ENCODE measurements at regions of chr16 and their contacts with region 1.

Region 1: GRCh38 chr16:67279296-67280089 is at the start of gene PLEKHG4:
- DNase-seq: peak; percentile 78
- H3K4me3 Mint-ChIP-seq: peak within 1 kb of the TSS; percentile 74
- H3K27ac Mint-ChIP-seq: peak within 1 kb of the TSS; percentile 74
- H3K4me1 Mint-ChIP-seq: peaks cover 33% of the 10 kb centered on the region
- H3K27me3 Mint-ChIP-seq: no peaks in the 10 kb centered on the region
- CTCF ChIP-seq: peak; percentile 76
- total RNA-seq, gene PLEKHG4: 30.4 and 32.7 TPM in 2 replicates

Region 2: DNA sequence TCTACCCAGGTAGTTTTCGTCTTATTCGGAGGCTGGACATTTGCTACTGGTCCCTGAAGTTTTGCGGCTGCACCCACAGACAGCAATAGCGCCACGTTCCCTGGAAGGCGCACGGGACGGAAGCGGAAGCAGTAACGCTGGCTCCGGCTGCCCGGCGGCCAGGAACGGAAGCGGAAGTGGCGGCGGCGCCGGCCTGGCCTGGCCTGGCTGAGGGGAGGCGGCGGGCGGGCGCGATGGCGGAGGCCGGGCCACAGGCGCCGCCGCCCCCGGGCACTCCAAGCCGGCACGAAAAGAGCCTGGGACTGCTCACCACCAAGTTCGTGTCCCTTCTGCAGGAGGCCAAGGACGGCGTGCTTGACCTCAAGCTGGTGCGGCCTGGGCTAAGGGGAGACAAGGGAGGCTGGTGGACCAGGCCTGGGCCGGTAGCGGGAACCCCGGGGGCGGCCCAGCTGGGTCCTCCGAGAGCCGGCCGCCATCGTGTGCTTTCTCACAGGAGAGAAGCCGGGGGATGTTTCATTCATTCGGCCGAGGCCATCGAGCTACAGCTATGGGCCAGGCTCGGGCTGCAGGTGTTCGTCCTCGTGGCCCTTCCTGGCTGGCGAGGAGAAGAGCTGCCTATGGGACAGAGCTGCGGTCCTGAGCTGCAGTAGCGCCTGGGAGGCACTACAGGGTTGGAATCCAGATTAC is 87.4 kb before region 1 on chr16 and contains the start of gene E2F4:
- CTCF ChIA-PET with region 1: no interaction called
- POLR2A ChIA-PET with region 1: no interaction called
- intact Hi-C with region 1: loop called (anchors 2 kb)
- DNase-seq: peak; percentile 88
- H3K4me3 Mint-ChIP-seq: peak within 1 kb of the TSS; percentile 77
- H3K27ac Mint-ChIP-seq: peak within 1 kb of the TSS; percentile 78
- H3K4me1 Mint-ChIP-seq: peaks cover 22% of the 10 kb centered on the region
- H3K27me3 Mint-ChIP-seq: no peaks in the 10 kb centered on the region
- CTCF ChIP-seq: no peak
- total RNA-seq, gene E2F4: 81.0 and 85.5 TPM in 2 replicates

Region 3: GRCh38 chr16:67311607-67312488 is 32.4 kb after region 1 on chr16:
- CTCF ChIA-PET with region 1: no interaction called
- POLR2A ChIA-PET with region 1: interaction called, 4 read pairs
- intact Hi-C with region 1: loop called (anchors 5 kb)
- DNase-seq: peak; percentile 94
- H3K4me3 Mint-ChIP-seq: no peak overlapping the region
- H3K27ac Mint-ChIP-seq: peak overlapping the region; percentile 71
- H3K4me1 Mint-ChIP-seq: peaks cover 16% of the 10 kb centered on the region
- H3K27me3 Mint-ChIP-seq: peaks cover 12% of the 10 kb centered on the region
- CTCF ChIP-seq: no peak

Region 4: DNA sequence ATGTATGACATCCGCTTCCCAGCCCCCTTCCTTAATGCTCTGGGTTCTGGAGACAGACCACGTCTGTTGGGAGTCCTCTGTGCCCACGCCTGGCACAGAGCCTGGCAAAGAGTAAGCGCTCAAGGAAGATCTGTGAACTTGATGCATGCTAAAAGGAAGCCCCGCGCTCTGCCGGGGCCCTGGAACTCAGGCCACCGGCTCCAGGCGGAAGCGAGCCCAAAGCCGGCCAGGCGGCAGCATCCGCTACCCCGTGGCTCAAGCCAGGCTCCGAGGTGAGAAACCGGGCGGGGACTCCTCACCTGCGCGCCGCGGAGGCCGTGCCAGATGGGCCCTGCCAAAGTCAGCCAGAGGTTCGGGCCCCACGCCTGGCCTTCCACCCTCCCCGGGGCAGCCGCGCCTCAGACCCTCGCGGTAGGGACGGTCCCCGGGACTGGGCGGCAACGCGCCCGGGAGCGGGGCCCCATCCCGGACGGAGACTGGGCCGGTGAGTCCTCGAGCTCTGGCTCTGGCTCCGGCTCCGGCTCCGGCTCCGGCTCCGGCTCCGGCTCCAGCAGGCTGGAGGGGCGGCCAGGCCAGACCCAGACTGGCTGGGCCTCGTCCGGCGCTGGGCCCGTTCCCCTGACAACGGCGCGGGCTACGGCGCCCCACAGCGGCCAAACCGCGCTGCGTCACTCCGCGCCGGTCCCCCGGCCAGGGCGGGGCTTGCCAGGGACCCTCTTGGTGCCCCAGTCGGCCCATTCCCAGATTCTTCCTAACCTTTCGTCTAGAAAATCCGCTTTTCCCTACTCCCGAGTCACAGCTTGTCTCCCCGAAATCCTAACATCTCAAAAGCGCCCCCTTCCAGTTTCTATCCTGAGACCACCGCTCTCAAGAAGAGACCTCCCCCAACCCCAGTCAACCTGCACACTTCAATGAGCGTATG is 136.6 kb after region 1 on chr16 and contains the start of gene ZDHHC1:
- CTCF ChIA-PET with region 1: interaction called, 9 read pairs
- POLR2A ChIA-PET with region 1: interaction called, 3 read pairs
- intact Hi-C with region 1: loop called (anchors 1 kb)
- DNase-seq: peak; percentile 60
- H3K4me3 Mint-ChIP-seq: peak within 1 kb of the TSS; percentile 81
- H3K27ac Mint-ChIP-seq: peak within 1 kb of the TSS; percentile 79
- H3K4me1 Mint-ChIP-seq: peaks cover 16% of the 10 kb centered on the region
- H3K27me3 Mint-ChIP-seq: peaks cover 14% of the 10 kb centered on the region
- CTCF ChIP-seq: peak; percentile 63
- total RNA-seq, gene ZDHHC1: 5.9 and 7.6 TPM in 2 replicates

Region 5: GRCh38 chr16:67653128-67653786 is 373.8 kb after region 1 on chr16:
- CTCF ChIA-PET with region 1: no interaction called
- POLR2A ChIA-PET with region 1: no interaction called
- intact Hi-C with region 1: no loop called
- DNase-seq: no peak
- H3K4me3 Mint-ChIP-seq: peak overlapping the region; percentile 26
- H3K27ac Mint-ChIP-seq: no peak overlapping the region
- H3K4me1 Mint-ChIP-seq: no peaks in the 10 kb centered on the region
- H3K27me3 Mint-ChIP-seq: peaks cover 26% of the 10 kb centered on the region
- CTCF ChIP-seq: peak; percentile 11